Caco-2 (cell line): ENCODE measurements at regions of chr7 and their contacts with region 1.

Region 1: GRCh38 chr7:47574482-47575329 is 7.2 kb downstream of the TNS3 start:
- DNase-seq: no peak
- H3K4me3 ChIP-seq: no peak overlapping the region
- H3K4me3 Mint-ChIP-seq: peak overlapping the region; percentile 71
- H3K27ac Mint-ChIP-seq: peak overlapping the region; percentile 92
- H3K4me1 ChIP-seq: peaks cover 88% of the 10 kb centered on the region
- H3K4me1 Mint-ChIP-seq: peaks cover 70% of the 10 kb centered on the region
- H3K27me3 ChIP-seq: no peaks in the 10 kb centered on the region
- H3K27me3 Mint-ChIP-seq: no peaks in the 10 kb centered on the region
- CTCF ChIP-seq: no peak

Region 2: GRCh38 chr7:47405921-47406792 is 168.5 kb before region 1 on chr7:
- CTCF ChIA-PET with region 1: no interaction called
- POLR2A ChIA-PET with region 1: interaction called, 12 read pairs
- intact Hi-C with region 1: no loop called
- DNase-seq: peak in 1 of 2 experiments; percentile 25
- H3K4me3 ChIP-seq: no peak overlapping the region
- H3K4me3 Mint-ChIP-seq: no peak overlapping the region
- H3K27ac Mint-ChIP-seq: peak overlapping the region; percentile 25
- H3K4me1 ChIP-seq: no peaks in the 10 kb centered on the region
- H3K4me1 Mint-ChIP-seq: peaks cover 11% of the 10 kb centered on the region
- H3K27me3 ChIP-seq: no peaks in the 10 kb centered on the region
- H3K27me3 Mint-ChIP-seq: no peaks in the 10 kb centered on the region
- CTCF ChIP-seq: no peak

Region 3: GRCh38 chr7:47536661-47537611 is 37.8 kb before region 1 on chr7:
- CTCF ChIA-PET with region 1: interaction called, 4 read pairs
- POLR2A ChIA-PET with region 1: interaction called, 3 read pairs
- intact Hi-C with region 1: loop called (anchors 1 kb)
- DNase-seq: no peak
- H3K4me3 ChIP-seq: no peak overlapping the region
- H3K4me3 Mint-ChIP-seq: peak overlapping the region; percentile 55
- H3K27ac Mint-ChIP-seq: peak overlapping the region; percentile 75
- H3K4me1 ChIP-seq: peaks cover 78% of the 10 kb centered on the region
- H3K4me1 Mint-ChIP-seq: peaks cover 54% of the 10 kb centered on the region
- H3K27me3 ChIP-seq: no peaks in the 10 kb centered on the region
- H3K27me3 Mint-ChIP-seq: no peaks in the 10 kb centered on the region
- CTCF ChIP-seq: no peak

Region 4: DNA sequence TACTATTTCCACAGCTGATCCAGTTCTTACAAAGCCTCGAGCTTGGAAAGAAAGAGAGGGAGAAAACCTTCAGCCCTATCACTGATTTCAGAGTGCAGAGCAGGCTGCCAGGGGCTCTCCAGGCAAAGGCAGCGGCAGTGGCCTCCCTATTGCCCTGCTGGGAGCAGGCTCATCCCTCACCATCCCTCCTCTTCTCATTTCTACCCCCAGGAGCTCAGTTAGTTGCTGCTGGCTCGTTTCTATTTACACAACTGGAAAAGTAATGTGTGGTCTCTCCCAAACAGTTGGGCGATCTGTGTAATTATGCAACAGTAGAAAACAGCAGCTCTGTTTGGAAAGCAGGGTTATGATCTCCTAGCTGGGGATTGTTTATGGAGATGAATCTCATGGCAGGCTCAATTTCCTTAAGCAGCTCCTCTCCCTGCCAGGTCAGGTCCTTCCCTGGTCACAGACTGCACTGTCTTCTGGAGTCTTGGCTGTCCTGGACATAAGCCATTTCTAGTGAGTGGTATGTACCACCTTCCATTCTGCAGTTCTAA is 35.9 kb after region 1 on chr7:
- CTCF ChIA-PET with region 1: no interaction called
- POLR2A ChIA-PET with region 1: no interaction called
- intact Hi-C with region 1: loop called (anchors 1 kb)
- DNase-seq: no peak
- H3K4me3 ChIP-seq: no peak overlapping the region
- H3K4me3 Mint-ChIP-seq: no peak overlapping the region
- H3K27ac Mint-ChIP-seq: peak overlapping the region; percentile 72
- H3K4me1 ChIP-seq: peaks cover 47% of the 10 kb centered on the region
- H3K4me1 Mint-ChIP-seq: peaks cover 33% of the 10 kb centered on the region
- H3K27me3 ChIP-seq: no peaks in the 10 kb centered on the region
- H3K27me3 Mint-ChIP-seq: no peaks in the 10 kb centered on the region
- CTCF ChIP-seq: no peak

Region 5: DNA sequence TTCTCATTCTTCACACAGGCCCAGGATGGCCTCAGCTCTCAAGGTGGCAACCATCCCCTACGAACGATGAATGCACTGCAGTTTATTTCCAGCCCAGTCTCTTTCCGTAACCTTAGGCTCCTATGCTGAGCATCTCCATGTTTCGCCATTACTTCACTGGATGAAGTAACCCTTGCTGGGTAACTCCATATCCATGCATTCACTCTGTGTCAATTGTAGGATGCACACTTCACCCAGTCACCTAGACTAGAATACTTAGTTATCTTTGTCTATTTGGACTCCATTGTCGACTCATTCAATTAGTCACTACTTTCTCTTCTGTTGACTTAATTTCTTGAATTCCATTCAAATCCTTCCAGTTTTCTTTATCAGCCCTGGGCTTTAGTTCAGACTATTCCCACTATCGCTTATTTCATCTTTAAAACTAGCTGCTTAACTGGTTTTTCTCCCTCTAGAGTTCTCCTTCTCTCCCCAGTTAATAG is 118.5 kb after region 1 on chr7:
- CTCF ChIA-PET with region 1: no interaction called
- POLR2A ChIA-PET with region 1: no interaction called
- intact Hi-C with region 1: loop called (anchors 1 kb)
- DNase-seq: peak in 1 of 2 experiments; percentile 45
- H3K4me3 ChIP-seq: no peak overlapping the region
- H3K4me3 Mint-ChIP-seq: no peak overlapping the region
- H3K27ac Mint-ChIP-seq: peak overlapping the region; percentile 19
- H3K4me1 ChIP-seq: peaks cover 16% of the 10 kb centered on the region
- H3K4me1 Mint-ChIP-seq: peaks cover 22% of the 10 kb centered on the region
- H3K27me3 ChIP-seq: no peaks in the 10 kb centered on the region
- H3K27me3 Mint-ChIP-seq: no peaks in the 10 kb centered on the region
- CTCF ChIP-seq: no peak

Region 6: GRCh38 chr7:47818796-47819606 is 244.3 kb after region 1 on chr7:
- CTCF ChIA-PET with region 1: interaction called, 6 read pairs
- POLR2A ChIA-PET with region 1: interaction called, 6 read pairs
- intact Hi-C with region 1: loop called (anchors 1 kb)
- DNase-seq: peak; percentile 66 to 82
- H3K4me3 ChIP-seq: no peak overlapping the region
- H3K4me3 Mint-ChIP-seq: no peak overlapping the region
- H3K27ac Mint-ChIP-seq: no peak overlapping the region
- H3K4me1 ChIP-seq: peaks cover 15% of the 10 kb centered on the region
- H3K4me1 Mint-ChIP-seq: peaks cover 26% of the 10 kb centered on the region
- H3K27me3 ChIP-seq: no peaks in the 10 kb centered on the region
- H3K27me3 Mint-ChIP-seq: no peaks in the 10 kb centered on the region
- CTCF ChIP-seq: peak; percentile 96 to 98